ENCODE measurements at regions of chr5 and their contacts with region 1.

Region 1: DNA sequence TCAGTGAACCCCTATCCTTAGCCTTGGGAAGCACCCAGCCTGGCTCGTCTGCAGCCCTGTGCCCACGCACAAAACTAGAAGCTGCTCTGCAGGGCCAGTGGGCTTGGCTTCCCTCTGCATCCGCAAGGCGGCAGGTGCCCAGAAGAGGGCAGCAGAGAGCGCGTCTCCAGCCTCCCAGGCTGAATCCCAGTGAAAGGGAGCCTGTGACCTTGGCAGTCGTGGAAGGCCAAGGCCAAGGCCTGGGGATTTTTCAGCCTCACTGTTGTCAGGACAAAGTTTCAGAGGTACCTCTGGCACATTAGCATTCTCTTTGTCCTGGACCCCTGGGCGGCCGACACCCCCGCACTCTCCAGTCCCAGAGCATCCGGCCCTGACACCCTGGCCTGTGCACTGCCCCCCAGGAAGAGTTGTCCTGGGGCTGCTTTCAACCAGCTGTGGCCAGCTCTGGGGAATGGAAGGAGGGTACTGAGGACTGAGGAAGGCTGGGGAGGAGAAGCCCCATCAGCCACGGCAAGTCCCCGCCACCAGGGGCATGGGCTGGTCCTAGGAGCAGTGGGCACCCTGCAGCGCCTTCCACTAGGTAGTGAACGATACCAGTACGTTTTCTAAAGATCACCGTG is 63.6 kb upstream of the IL17B start:
- DNase-seq: peak; percentile 84
- H3K4me3 ChIP-seq: no peak overlapping the region
- H3K27ac ChIP-seq: peak overlapping the region; percentile 54
- H3K4me1 ChIP-seq: peaks cover 18% of the 10 kb centered on the region
- H3K27me3 ChIP-seq: no peaks in the 10 kb centered on the region

Region 2: DNA sequence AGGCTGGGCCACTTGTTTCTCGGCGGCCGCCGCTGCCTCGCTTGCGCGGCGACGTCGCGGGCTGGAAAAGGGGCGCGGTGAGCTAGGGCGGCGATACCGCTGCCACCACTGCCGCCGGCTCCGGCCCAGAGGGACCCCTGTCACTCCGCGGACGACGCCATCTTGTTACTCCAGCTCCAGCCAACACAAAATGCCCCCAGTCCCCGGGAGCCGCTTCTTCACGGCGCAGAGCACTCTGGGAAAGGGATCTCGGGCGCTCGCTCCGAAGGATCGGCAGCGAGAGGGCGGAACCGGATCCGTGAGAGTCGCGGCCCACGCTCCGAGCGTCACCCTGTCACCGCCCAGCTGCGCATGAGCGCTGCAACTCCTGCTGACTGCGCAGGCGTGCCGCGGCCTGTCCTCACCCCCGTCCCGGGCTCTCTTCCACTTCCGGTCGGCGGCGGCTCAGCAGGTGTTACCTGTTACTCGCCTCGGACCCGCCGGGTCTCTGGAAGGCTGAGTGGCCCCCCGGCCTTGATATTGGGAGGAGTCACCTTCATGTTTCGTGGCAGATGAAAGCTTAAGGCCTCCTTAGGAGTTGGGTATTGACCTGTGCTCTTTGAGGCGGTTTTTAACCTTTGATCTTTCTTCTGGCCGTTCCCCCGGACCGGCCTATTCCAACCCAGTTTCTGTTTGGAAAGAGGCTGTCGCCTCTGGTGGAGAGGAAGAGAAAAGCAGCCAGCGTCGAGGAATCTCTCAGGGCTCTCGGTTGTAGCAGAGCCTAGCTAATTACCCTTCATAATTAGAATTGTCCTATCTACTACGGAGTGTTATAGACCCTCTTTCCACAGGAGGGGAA is 108.7 kb after region 1 on chr5 and contains the start of gene CSNK1A1:
- in situ Hi-C with region 1: loop called (anchors 5 kb)
- DNase-seq: peak; percentile 100
- H3K4me3 ChIP-seq: peak within 1 kb of the TSS; percentile 98
- H3K27ac ChIP-seq: peak within 1 kb of the TSS; percentile 96
- H3K4me1 ChIP-seq: peaks cover 32% of the 10 kb centered on the region
- H3K27me3 ChIP-seq: no peaks in the 10 kb centered on the region
- total RNA-seq, gene CSNK1A1: 415 and 428 TPM in 2 replicates

Region 3: GRCh38 chr5:149583394-149583793 is 140.7 kb after region 1 on chr5:
- in situ Hi-C with region 1: no loop called
- DNase-seq: peak; percentile 35
- H3K4me3 ChIP-seq: no peak overlapping the region
- H3K27ac ChIP-seq: no peak overlapping the region
- H3K4me1 ChIP-seq: no peaks in the 10 kb centered on the region
- H3K27me3 ChIP-seq: no peaks in the 10 kb centered on the region

Measured in GM23248 (cell line).